Natural killer cell (primary cell): ENCODE measurements at regions of chr1 and their contacts with region 1.

Region 1: GRCh38 chr1:20932437-20932977 is 145.4 kb upstream of the HP1BP3 start:
- DNase-seq: peak in 1 of 2 donors; percentile 39
- ATAC-seq: peak; percentile 82 to 84 (median 84)
- H3K4me3 ChIP-seq: no peak overlapping the region
- H3K4me3 Mint-ChIP-seq: peak overlapping the region; percentile 71
- H3K27ac ChIP-seq: peak overlapping the region; percentile 9
- H3K27ac Mint-ChIP-seq: peak overlapping the region; percentile 89 to 91
- H3K4me1 ChIP-seq: peaks cover 5% of the 10 kb centered on the region
- H3K4me1 Mint-ChIP-seq: peaks cover 26 to 36% of the 10 kb centered on the region in 2 donors
- H3K27me3 ChIP-seq: no peaks in the 10 kb centered on the region
- H3K27me3 Mint-ChIP-seq: no peaks in the 10 kb centered on the region
- CTCF ChIP-seq: no peak

Region 2: DNA sequence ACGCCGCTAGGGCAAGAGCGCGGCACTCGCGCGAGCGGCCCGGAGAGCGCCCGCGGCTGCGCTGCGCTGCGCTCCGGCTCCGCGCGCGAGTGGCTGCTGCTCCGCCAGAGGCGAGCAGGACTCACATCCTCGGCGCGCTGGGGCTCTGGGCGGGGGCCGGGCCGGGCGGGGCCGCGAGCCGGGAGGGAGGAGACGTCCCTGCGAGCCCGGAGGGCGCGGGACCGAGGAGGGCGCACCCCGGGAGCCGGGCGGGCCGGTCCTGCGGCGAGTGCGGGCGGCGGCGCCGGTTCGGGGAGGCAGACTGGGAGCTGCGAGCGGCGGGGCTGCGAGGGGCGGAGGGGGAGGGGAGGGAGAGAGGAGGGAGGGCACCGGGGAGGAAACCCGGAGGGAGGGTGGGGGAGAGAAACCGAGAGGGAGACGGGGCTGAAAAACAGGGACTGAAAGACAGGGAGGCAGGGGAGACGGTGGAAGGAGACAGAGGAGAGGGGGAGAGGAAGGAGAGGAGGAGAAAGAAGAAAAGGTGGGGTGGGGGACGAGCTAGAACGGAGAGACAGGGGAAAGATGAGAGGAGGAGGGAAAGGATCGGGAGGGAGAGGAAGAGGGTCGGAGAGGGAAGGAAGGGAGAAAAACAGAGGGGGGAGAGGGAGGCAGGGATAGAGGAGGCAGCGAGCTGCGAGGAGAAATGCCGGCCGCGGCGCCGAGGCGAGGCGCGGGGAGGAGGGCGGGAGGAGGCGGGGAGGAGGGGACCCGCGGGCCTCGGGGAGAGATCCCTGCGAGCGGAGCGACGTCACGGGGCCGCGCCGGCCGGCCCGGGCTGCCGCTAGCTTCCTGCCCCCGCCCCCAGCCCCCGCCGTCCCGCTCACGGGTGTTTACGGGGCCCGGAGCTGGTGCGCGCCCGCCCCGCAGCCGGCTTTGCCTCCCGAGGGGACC is 446.7 kb before region 1 on chr1 and contains the start of gene CAMK2N1:
- intact Hi-C with region 1: no loop called
- DNase-seq: peak; percentile 35 to 78
- ATAC-seq: peak; percentile 53 to 82 (median 79)
- H3K4me3 ChIP-seq: peak within 1 kb of the TSS; percentile 49
- H3K4me3 Mint-ChIP-seq: peak within 1 kb of the TSS; percentile 95
- H3K27ac ChIP-seq: no peak within 1 kb of the TSS
- H3K27ac Mint-ChIP-seq: peak within 1 kb of the TSS in 1 of 2 donors; percentile 69
- H3K4me1 ChIP-seq: peaks cover 27% of the 10 kb centered on the region
- H3K4me1 Mint-ChIP-seq: peaks cover 0 to 14% of the 10 kb centered on the region in 2 donors
- H3K27me3 ChIP-seq: peaks cover 28% of the 10 kb centered on the region
- H3K27me3 Mint-ChIP-seq: peaks cover 51 to 65% of the 10 kb centered on the region in 2 donors
- CTCF ChIP-seq: no peak
- total RNA-seq, gene CAMK2N1: 1.6 to 2.6 (median 1.6) TPM

Region 3: DNA sequence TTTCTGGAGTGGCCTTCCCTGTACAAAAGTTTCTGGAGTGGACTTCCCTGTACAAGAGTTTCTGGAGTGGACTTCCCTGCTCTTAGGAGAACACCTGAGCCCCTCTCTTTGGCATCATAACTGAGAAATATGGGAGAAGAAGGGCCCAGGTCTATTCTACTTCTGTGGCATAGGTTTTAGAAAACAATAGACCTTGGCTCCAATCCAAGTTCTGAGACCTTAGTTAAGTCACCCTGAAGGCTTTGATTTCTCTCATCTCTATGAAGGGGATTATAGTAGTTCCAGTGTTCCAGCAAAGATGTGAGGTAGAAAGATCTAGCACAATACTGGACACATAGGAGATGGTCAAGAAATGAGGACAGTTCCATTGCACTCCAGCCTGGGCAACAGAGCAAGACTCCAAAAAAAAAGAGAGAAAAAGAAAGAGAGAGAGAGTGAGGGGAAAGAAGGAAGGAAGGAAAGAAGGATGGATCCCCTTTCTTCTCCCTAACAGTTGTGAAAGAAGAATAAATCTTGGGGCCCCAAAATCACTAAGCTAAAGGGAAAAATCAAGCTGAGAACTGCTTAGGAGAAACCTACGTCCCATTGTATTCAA is 257.5 kb after region 1 on chr1:
- intact Hi-C with region 1: loop called (anchors 10 kb)
- DNase-seq: no peak
- ATAC-seq: no peak
- H3K4me3 ChIP-seq: no peak overlapping the region
- H3K4me3 Mint-ChIP-seq: peak overlapping the region; percentile 30
- H3K27ac ChIP-seq: no peak overlapping the region
- H3K27ac Mint-ChIP-seq: peak overlapping the region; percentile 43 to 72
- H3K4me1 ChIP-seq: peaks cover 17% of the 10 kb centered on the region
- H3K4me1 Mint-ChIP-seq: peaks cover 30 to 53% of the 10 kb centered on the region in 2 donors
- H3K27me3 ChIP-seq: no peaks in the 10 kb centered on the region
- H3K27me3 Mint-ChIP-seq: no peaks in the 10 kb centered on the region
- CTCF ChIP-seq: no peak